ENCODE measurements at regions of chr5 and their contacts with region 1.

Region 1: DNA sequence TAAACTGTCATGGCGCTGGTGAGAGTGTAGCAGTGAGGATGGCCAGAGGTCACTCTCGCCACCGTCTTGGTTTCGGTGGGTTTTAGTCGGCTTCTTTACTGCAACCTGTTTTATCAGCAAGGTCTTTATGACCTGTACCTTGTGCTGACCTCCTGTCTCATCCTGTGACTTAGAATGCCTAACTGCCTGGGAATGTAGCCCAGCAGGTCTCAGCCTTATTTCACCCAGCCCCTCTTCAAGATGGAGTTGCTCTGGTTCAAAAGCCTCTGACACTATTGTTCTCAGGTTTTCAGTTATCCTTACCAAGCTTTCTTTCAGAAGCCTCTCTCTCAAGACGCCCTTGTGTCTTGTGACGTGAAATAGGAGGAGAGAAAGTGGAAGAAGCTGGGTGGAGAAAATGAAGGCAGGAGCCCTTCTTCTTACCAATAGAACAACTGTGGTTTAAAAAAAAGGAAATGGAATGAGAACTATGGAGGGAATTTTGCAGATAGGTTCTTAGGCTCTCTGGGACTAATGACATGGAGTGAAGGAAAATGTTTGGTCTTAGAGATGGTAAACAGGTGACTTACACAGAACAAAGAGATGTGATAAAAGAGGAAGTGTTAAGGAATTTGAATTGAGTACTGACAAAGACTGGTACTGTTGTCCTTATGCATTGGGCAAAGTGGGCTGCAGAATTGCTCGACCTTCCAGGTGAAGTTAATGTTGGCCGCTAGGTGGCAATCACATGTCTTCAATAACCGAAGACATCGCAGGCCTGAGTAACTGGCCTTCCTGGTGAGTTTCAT is 133.3 kb upstream of the RAI14 start:
- DNase-seq: peak; percentile 66 to 80 (median 77)
- H3K4me3 ChIP-seq: no peak overlapping the region
- H3K27ac ChIP-seq: no peak overlapping the region
- H3K4me1 ChIP-seq: peaks cover 0 to 7% (median 3%) of the 10 kb centered on the region in 4 experiments
- H3K27me3 ChIP-seq: no peaks in the 10 kb centered on the region

Region 2: GRCh38 chr5:33997331-33997983 is 525.3 kb before region 1 on chr5:
- CTCF ChIA-PET with region 1: no interaction called
- POLR2A ChIA-PET with region 1: no interaction called
- DNase-seq: peak; percentile 74 to 87 (median 85)
- H3K4me3 ChIP-seq: no peak overlapping the region
- H3K27ac ChIP-seq: peak overlapping the region in 1 of 2 experiments; percentile 19
- H3K4me1 ChIP-seq: peaks cover 0 to 14% (median 5%) of the 10 kb centered on the region in 4 experiments
- H3K27me3 ChIP-seq: no peaks in the 10 kb centered on the region

Region 3: GRCh38 chr5:34411470-34412384 is 111.1 kb before region 1 on chr5:
- CTCF ChIA-PET with region 1: no interaction called
- POLR2A ChIA-PET with region 1: no interaction called
- DNase-seq: no peak
- H3K4me3 ChIP-seq: no peak overlapping the region
- H3K27ac ChIP-seq: no peak overlapping the region
- H3K4me1 ChIP-seq: no peaks in the 10 kb centered on the region
- H3K27me3 ChIP-seq: peaks cover 0 to 2% (median 0%) of the 10 kb centered on the region in 5 experiments

Region 4: GRCh38 chr5:34533582-34534522 is 11.1 kb after region 1 on chr5:
- CTCF ChIA-PET with region 1: interaction called, 10 read pairs
- POLR2A ChIA-PET with region 1: no interaction called
- DNase-seq: no peak
- H3K4me3 ChIP-seq: no peak overlapping the region
- H3K27ac ChIP-seq: no peak overlapping the region
- H3K4me1 ChIP-seq: no peaks in the 10 kb centered on the region
- H3K27me3 ChIP-seq: peaks cover 0 to 3% (median 0%) of the 10 kb centered on the region in 5 experiments

Region 5: DNA sequence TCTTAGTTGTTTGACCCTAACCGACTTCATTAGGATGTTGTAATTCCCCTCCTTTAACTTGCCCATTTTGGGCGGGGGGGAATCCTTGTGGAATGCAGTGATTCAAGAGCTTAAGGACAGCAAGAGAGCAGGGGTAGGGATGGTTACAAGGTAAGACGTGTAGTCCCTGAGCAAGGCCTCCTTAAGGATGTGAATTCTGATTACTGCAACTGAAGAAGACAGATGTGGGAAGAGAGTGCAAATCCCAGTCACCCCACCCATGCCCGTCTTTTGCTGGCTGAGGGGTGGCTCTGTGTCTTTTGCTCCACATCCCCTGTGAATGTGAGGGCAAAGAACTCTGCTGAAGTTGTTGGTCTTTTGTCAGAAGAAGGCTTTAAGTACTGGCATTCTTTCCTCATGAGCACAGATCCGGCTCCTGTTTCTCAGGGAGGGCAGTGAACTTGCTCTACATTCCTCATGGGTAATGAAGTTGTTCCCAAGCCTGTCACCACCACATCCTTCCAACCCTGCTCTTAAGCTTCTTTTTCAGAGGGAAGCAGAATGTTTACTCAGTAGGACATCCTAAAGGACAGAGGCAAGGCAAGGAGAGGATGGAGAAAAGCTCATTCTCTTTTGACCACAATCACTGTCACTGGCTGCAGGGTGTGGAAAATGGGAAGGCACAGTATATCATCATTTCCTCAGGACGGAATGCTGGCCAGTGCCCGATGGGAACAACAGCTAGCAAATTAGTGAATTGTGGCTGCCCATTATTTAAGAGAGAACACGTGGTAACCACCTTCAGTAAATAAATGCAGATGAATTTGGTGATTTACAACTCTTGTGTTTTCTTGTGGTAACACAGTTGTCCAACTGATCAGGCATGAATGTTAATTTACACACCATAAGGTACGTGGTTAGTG is 194.9 kb after region 1 on chr5:
- CTCF ChIA-PET with region 1: no interaction called
- POLR2A ChIA-PET with region 1: no interaction called
- DNase-seq: no peak
- H3K4me3 ChIP-seq: no peak overlapping the region
- H3K27ac ChIP-seq: no peak overlapping the region
- H3K4me1 ChIP-seq: no peaks in the 10 kb centered on the region
- H3K27me3 ChIP-seq: no peaks in the 10 kb centered on the region